ENCODE measurements at regions of chr5 and their contacts with region 1.

Region 1: GRCh38 chr5:150340614-150341255 is 16.8 kb upstream of the TCOF1 start:
- DNase-seq: no peak
- ATAC-seq: no peak
- H3K4me3 ChIP-seq: no peak overlapping the region
- H3K27ac ChIP-seq: no peak overlapping the region
- H3K4me1 ChIP-seq: no peaks in the 10 kb centered on the region
- H3K27me3 ChIP-seq: no peaks in the 10 kb centered on the region

Region 2: GRCh38 chr5:150272526-150272925 is 68.2 kb before region 1 on chr5:
- intact Hi-C with region 1: loop called in 1 of 4 experiments (anchors 10 kb)
- DNase-seq: peak in 1 of 3 donors; percentile 18
- ATAC-seq: no peak
- H3K4me3 ChIP-seq: no peak overlapping the region
- H3K27ac ChIP-seq: no peak overlapping the region
- H3K4me1 ChIP-seq: no peaks in the 10 kb centered on the region
- H3K27me3 ChIP-seq: no peaks in the 10 kb centered on the region